AG04450 (cell line): ENCODE measurements at regions of chr6 and their contacts with region 1.

Region 1: DNA sequence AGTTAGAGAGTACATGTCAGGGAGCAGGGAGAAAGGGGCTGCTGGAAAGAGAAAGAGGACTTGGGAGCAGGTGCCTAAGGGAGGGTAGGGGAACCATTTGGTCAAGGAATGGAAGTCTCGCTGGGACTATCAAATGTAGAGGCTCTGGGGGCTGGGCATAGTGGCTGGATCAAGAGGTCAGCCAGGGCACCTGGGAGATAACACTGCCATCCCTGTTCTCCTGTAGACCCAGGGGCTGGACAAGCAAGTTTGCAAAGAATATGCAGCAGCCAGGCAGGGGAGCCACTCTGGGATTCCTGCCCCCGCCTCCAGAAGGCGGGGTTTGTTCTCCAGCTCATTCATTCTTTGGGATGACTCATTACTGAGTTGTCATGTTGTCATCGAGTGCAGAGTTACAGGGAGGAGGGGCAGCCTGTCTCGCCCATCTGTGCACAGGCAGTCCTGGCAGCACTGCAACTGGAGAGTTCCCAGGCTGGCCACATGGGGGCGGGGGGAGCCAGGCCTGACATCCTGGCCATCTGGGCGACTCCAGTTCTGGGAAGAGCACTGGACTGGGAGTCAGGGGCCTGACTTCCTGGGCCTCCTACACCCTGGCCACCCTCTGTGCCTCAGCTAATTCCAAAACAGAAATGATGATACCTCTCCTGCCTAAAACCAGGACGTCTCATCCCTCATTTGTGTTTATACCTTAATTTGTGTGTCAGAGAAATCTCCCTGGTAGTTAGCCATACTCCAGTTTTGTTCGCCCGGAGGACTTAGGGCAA is 28.2 kb upstream of the ZFAND3 start:
- DNase-seq: peak; percentile 93
- H3K4me3 ChIP-seq: no peak overlapping the region
- H3K27ac ChIP-seq: no peak overlapping the region
- H3K27me3 ChIP-seq: no peaks in the 10 kb centered on the region
- CTCF ChIP-seq: peak; percentile 92

Region 2: DNA sequence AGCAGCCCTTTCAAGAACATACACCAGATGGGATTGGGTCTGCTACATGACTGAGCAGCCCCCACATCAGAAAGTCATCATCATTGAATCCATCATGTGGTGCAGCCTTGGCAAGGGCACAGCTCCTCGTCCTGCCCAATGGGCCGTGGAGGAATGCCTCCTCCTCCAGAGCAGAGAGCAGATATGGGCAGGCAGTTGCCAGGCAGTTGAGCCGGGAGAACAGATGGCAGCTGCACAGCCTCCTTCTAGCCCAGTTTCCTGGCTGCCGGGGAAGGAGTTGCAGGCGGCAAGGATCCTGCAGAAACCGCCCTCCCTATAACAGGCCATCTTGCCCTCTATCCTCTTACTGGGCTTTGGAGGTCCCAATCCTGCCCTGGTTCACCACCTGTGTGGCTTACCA is 16.3 kb after region 1 on chr6:
- CTCF ChIA-PET with region 1: interaction called, 18 read pairs
- POLR2A ChIA-PET with region 1: no interaction called
- DNase-seq: no peak
- H3K4me3 ChIP-seq: no peak overlapping the region
- H3K27ac ChIP-seq: no peak overlapping the region
- H3K27me3 ChIP-seq: peaks cover 3% of the 10 kb centered on the region
- CTCF ChIP-seq: peak; percentile 42

Region 3: DNA sequence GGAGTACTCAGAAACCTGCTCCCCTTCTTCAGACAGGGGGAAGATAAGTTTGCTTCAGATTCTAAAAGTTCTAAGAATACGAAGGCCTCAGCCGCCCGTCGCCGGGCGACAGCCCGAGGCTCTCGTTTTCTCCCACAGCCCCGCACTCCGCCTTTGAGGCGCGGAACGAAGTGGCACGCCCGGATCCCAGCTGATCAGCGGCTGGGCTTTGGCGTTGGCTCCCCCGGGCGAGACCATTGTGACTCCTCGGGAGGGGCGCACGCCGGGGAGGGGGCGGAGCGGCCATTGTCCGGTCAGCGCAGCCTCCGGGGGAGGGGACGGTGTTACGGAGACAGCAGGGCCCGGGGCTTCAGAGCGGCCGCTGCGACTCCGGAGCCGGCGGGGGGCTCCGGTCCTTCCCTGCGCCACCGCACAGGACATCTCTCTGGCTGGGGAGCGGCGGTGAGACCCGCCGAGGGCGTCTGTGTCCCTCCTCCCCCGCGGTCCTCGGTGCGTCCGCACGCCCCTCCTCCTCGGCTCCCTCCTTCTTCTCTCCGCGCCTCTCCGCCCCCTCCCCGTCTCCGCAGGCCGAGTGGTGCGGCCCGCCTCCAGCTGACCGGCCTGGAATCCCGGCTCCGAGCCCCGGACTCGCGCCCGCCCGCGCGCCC is 28.0 kb after region 1 on chr6 and contains the start of gene ZFAND3:
- CTCF ChIA-PET with region 1: interaction called, 11 read pairs
- POLR2A ChIA-PET with region 1: interaction called, 10 read pairs
- DNase-seq: peak; percentile 95
- H3K4me3 ChIP-seq: peak within 1 kb of the TSS; percentile 88
- H3K27ac ChIP-seq: peak within 1 kb of the TSS; percentile 98
- H3K27me3 ChIP-seq: no peaks in the 10 kb centered on the region
- CTCF ChIP-seq: no peak
- polyA plus RNA-seq, gene ZFAND3: 15.5 and 29.5 TPM in 2 replicates

Region 4: GRCh38 chr6:38027685-38028373 is 236.5 kb after region 1 on chr6:
- CTCF ChIA-PET with region 1: interaction called, 9 read pairs
- POLR2A ChIA-PET with region 1: interaction called, 11 read pairs
- DNase-seq: no peak
- H3K4me3 ChIP-seq: no peak overlapping the region
- H3K27ac ChIP-seq: no peak overlapping the region
- H3K27me3 ChIP-seq: no peaks in the 10 kb centered on the region
- CTCF ChIP-seq: no peak

Region 5: DNA sequence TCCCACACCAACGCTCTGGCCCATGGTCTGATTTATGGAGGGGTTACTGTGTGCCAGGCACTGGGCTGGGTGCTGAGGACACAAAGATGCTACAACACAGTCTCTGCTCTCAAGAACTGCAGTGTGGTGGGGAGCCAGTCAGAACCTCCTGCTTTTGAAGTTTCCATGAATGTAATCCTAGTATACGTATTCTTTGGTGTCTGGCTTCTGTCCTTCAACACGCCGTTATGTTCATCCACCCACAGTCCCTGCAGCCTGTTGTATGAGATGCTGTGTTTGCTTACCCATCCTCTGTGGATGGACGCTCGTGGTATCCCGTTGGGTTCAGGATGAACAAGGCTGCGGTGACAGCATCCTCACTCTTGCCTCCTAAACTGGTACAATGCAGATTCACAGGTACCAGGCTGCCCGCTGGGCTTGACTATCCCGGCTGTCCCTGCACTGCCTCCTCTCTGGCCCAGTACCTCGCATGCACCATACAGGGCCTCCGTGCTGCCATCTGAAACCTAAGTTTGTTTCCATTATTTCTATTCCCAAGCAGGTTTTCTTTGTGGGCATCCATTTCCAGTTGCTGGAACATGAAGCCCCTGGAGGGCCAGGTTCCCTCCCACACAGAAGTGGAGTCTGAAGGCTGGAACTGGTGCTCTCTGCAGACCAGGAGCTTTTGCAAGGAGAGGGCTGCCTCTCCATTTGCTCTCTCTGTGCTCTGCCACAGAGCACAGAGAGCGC is 392.7 kb after region 1 on chr6:
- CTCF ChIA-PET with region 1: interaction called, 10 read pairs
- POLR2A ChIA-PET with region 1: no interaction called
- DNase-seq: no peak
- H3K4me3 ChIP-seq: no peak overlapping the region
- H3K27ac ChIP-seq: no peak overlapping the region
- H3K27me3 ChIP-seq: no peaks in the 10 kb centered on the region
- CTCF ChIP-seq: no peak